ENCODE measurements at regions of chr10 and their contacts with region 1.

Region 1: DNA sequence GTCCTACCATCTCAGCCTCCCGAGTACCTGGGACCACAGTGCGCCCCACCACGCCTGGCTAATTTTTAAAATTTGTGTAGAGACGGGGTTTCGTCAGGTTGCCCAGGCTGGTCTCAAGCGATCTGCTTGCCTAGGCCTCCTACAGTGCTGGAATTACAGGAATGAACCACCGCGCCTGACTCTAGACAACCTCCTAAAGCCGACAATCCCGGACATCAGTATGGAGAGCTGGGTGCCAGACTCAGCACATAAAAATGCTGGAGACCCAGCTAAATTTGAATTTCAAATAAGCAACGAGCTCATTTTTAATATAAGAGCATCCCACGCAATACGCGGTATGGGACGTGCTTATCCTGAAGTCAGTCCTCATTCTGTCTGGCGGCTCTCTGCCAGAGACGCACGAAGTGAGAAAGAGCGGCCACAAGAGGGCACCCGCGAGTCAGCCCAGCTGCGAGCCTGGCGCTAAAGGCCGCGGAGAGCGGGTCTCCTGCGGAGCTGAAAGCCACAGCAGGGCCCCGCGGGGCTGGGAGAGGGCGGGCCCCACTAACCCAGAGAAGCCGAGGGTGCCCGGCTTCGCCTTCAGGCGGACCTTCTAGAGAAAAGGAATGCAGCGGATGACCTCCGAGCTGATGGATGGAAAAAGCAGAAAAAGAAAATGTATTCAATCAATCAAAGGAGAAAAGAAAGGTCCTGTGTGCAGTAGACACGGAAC is 7.0 kb downstream of the CALY start:
- DNase-seq: peak; percentile 39
- H3K4me3 ChIP-seq: no peak overlapping the region
- H3K27me3 ChIP-seq: peaks cover 22% of the 10 kb centered on the region
- CTCF ChIP-seq: peak; percentile 98

Region 2: DNA sequence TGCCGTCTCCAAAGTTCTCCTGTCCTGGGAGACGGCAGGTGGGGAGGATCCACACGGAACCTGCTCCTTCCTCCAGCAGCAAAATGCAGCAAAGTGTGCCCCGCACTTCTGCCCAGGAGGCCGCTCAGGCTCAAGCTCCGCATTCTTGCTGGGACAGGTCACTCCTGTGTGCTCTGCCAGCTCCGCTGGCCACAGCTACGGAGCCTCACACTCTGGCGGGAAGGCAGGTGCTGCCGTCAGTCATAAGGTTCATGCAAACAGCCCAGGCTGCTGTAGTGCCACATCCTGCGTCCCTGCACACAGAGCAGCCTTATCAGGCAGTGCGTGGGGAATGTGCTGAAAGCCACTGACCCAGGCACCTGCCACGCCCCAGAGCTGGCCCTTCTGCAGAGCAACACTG is 219.5 kb before region 1 on chr10:
- CTCF ChIA-PET with region 1: no interaction called
- POLR2A ChIA-PET with region 1: no interaction called
- DNase-seq: no peak
- H3K4me3 ChIP-seq: no peak overlapping the region
- H3K27me3 ChIP-seq: no peaks in the 10 kb centered on the region
- CTCF ChIP-seq: no peak

Region 3: DNA sequence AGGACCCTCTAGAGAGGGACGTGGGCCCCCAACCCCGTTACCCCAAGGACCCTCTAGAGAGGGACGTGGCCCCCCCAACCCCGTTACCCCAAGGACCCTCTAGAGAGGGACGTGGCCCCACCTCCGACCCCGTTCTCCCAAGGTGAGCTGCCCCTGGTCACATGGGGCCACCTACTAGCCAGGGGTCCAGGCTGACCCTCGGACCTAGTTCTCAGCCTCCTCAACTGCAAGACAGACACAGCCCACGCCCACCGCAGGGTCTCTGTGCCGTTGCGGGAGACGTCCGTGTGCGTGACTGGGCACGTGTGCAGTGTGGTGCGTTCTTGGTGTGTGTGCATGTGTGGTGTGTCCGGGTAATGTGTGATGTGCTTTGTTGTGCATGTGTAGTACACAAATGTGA is 121.2 kb before region 1 on chr10:
- CTCF ChIA-PET with region 1: no interaction called
- POLR2A ChIA-PET with region 1: no interaction called
- DNase-seq: no peak
- H3K4me3 ChIP-seq: no peak overlapping the region
- H3K27me3 ChIP-seq: no peaks in the 10 kb centered on the region
- CTCF ChIP-seq: no peak

Region 4: DNA sequence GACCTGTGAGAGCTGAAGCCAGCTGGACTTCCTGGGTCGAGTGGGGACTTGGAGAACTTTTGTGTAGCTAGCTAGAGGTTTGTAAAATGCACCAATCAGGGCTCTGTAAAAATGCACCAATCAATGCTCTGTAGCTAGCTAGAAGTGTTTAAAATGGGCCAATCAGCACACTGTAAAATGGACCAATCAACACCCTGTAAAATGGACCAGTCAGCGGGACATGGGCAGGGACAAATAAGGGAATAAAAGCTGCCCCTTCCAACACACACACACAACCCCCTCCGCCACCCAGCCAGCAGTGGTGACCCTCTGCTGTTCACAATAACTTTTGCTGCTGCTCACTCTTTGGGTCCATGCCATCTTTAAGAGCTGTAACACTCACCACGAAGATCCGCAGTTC is 13.8 kb before region 1 on chr10:
- CTCF ChIA-PET with region 1: interaction called, 20 read pairs
- POLR2A ChIA-PET with region 1: no interaction called
- DNase-seq: no peak
- H3K4me3 ChIP-seq: no peak overlapping the region
- H3K27me3 ChIP-seq: no peaks in the 10 kb centered on the region; the same call in 1 of the 2 replicates
- CTCF ChIP-seq: no peak

Region 5: DNA sequence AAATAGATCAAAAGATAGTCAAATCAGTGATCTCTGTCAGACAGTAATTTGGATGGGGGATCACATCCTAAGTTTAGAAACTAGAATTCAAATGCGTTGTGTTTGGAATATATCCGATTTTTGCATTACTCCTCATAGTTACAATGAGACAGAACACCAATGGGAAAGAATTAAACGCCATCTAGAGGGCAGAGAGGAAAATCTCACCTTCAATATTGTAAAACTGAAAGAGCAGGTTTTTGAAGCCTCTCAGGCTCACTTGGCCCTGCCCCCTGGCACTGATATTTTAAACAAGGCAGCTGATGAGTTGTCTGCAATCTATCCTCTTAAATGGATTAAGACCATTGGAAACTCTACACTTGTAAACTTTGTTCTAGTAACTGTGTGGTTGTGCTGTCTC is 279.2 kb after region 1 on chr10:
- CTCF ChIA-PET with region 1: interaction called, 13 read pairs
- POLR2A ChIA-PET with region 1: no interaction called
- DNase-seq: no peak
- H3K4me3 ChIP-seq: no peak overlapping the region
- H3K27me3 ChIP-seq: no peaks in the 10 kb centered on the region
- CTCF ChIP-seq: peak; percentile 63

Region 6: DNA sequence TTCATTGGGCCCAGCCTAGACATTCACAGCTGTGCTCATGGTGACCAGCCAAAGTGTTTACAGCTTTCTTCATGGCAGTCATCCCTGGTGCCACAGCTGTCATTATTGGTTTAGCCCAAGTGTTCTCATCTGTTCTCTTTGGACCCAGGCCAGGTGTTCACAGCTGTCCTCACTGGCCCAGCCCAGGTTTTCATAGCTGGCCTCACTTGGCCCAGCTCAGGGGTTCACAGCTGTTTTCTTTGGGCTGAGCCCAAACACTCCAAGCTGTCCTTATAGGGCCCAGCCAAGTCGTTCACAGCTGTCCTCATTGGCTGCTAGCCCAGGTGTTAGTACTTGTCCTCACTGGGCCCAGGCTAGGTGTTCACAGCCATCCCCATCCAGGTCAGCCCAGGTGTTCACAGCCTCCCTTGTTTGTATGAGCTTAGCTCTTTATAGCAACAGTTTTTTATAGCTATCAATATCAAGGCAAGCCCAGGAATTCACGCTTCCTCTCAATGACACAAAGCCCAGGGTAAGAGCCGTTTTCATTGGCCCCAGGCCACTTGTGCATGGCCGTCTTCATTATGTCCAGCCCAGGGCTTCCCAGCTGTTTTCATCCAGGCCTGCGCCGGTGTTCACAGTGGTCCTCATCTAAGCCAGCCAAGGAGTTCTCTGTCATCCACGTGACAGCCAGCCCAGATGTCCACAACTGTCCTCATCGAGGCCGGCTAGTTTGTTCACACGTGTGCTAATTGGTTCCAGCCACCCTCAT is 285.4 kb after region 1 on chr10:
- CTCF ChIA-PET with region 1: interaction called, 13 read pairs
- POLR2A ChIA-PET with region 1: no interaction called
- DNase-seq: no peak
- H3K4me3 ChIP-seq: no peak overlapping the region
- H3K27me3 ChIP-seq: no peaks in the 10 kb centered on the region
- CTCF ChIP-seq: no peak